Sciatic nerve (tissue), 2 donors: ENCODE measurements at regions of chr3 and their contacts with region 1.

Region 1: DNA sequence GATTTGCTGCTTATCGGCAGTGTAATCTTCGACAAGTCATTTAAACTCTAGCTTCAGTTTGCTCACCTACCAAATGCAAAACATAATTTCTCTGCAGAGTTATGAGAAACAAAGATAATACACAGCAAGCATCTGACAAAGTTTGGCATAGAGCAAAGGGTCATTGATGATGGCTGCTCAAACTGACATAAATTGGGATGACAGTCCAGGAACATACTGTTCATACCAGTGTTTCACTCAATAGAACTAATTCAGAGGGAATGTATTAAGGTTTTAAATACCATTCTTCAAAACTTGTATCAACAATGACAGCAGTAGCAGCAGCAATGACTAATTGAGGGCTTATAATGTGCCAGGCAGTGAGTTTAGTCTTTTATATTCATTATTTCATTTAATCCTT is 137.6 kb downstream of the SPATA16 start:
- DNase-seq: no peak
- ATAC-seq: no peak

Region 2: DNA sequence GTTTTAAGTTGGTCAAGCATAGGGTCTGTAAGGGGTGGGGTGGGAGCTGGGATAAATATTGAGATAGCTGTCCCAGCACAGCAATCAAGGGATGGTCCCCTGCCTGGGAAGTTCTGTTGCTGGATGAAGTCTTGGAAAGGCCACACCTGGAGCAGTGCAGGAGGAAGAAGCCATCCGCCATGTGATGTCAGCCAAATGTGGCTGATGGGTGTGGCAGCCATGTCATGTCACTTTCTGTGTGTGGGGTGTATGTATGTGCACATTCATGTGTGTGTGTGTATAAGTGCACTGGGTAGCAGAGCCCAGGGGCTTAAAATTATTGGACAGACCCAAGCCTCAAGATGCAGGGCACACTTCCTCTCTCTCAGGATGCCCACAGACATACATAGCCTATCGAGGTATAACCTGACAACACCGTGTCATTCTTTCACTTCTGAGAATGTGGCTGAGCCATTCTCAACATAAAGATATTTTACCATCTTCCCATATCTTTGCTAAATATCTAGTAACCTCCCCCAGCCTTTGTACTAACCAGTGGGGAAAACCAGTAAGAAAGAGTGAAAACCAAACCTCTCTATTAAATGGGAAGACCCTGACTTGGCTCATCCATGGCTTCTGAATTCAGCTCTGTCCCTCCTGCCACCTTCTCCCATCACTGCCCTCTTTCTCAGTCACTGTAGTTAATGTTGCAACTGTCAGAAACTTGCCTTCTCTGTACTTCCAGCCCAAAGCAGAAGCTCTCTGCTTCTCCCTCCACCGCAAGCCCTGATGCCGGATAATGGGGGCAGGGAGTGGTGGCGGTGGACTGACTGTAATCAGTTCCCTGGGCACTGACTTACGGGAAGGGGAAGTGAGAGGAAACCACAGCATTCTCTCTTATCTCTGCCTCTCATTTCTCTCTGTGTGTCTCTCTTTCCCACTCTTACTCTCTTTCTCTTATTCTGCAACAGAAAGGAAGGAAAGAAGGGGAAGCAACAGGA is 491.4 kb before region 1 on chr3:
- intact Hi-C with region 1: no loop called
- DNase-seq: peak; percentile 67
- ATAC-seq: peak; percentile 47

Region 3: DNA sequence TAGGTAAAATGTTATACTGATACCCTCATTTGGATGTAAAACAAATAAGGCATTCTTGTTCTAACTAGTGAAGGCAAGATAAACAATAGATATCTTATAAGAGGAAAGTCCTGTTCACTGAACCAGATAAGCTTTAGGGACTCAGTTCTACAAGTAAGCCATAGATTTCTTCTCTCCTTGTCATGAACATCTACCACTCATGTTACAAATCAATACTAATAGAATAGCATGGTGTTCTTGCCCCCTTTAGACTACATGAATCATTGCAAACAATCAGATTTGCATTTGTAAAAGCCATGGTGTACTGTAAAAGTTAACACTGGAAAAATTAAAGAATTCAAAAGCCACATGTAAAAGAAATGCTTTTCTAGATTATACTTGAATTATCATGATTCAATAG is 894.2 kb after region 1 on chr3:
- intact Hi-C with region 1: loop called (anchors 5 kb)
- DNase-seq: no peak
- ATAC-seq: no peak